ENCODE measurements at regions of chr7 and their contacts with region 1.

Region 1: GRCh38 chr7:105934572-105935185 is 28.4 kb upstream of the CDHR3 start:
- DNase-seq: no peak
- ATAC-seq: peak; percentile 93

Region 2: DNA sequence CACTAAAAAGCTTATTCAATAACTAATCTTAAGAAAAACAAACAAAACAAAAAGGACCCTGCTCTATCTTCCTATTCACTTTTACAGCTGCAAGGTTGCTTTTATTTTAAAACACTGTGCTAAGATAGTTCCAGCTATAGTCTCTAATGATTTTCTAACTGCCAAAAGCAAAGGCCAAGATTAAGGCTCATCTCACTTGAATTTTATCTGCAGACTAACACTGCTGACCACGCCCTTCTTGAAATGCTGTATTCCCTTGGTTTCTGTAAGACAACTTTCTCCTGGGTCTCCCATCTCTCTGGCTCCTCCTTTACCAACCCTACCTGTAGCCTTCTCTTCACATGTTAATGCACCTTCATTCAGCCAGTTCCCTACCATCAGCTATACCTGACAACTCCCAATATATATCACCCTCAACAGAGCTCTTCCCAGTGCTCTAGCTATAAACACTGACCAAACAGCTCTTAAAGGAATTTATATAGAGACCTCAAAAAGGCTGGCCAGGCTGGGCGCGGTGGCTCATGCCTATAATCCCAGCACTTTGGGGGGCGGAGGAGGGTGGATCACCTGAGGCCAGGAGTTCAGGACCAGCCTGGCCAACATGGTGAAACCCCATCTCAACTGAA is 557.7 kb before region 1 on chr7:
- intact Hi-C with region 1: no loop called
- DNase-seq: no peak
- ATAC-seq: no peak

Region 3: GRCh38 chr7:106009403-106010226 is 74.9 kb after region 1 on chr7:
- intact Hi-C with region 1: loop called (anchors 2 kb)
- DNase-seq: peak; percentile 87
- ATAC-seq: peak; percentile 97